Activated CD4-positive, alpha-beta memory T cell treated with anti-CD3 and anti-CD28 coated beads, Interleukin-2, amount 10 ng/mL, durations not matched to agents 7 days and 5 days (primary cell): ENCODE measurements at regions of chr2 and their contacts with region 1.

Region 1: GRCh38 chr2:84781942-84782716 is 98.8 kb downstream of the TRABD2A start:
- DNase-seq: peak; percentile 75
- H3K4me3 Mint-ChIP-seq: no peak overlapping the region
- H3K27ac Mint-ChIP-seq: peak overlapping the region; percentile 97
- H3K4me1 Mint-ChIP-seq: peaks cover 67% of the 10 kb centered on the region
- H3K27me3 Mint-ChIP-seq: no peaks in the 10 kb centered on the region

Region 2: DNA sequence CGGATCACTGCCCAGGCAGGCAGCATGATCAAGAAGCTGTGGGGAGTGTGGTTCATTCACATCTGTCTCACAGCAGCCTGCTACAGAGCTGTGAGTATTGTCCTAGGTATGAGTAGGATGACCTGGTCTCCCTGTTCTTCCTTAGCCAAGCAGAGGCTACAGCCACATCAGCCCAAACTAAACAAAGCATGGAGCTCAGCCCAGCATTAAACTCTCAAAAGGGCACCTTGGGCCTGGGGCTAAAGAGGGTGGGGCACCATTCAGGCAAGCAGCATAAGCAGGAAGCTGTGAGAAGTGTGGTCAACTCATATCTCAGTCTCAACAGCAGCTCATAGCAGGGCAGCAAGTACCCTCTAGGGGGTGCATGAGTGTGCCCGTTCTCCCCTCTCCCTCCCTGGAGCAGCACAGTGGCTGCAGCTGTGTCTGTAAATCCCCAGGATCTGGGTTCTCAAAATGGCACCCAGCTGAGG is 40.8 kb before region 1 on chr2:
- CTCF ChIA-PET with region 1: interaction called, 12 read pairs
- POLR2A ChIA-PET with region 1: interaction called, 11 read pairs
- DNase-seq: peak; percentile 70
- H3K4me3 Mint-ChIP-seq: no peak overlapping the region
- H3K27ac Mint-ChIP-seq: peak overlapping the region; percentile 66
- H3K4me1 Mint-ChIP-seq: peaks cover 12% of the 10 kb centered on the region
- H3K27me3 Mint-ChIP-seq: peaks cover 4% of the 10 kb centered on the region

Region 3: GRCh38 chr2:84832772-84833461 is 50.8 kb after region 1 on chr2:
- CTCF ChIA-PET with region 1: no interaction called
- POLR2A ChIA-PET with region 1: interaction called, 12 read pairs
- DNase-seq: peak; percentile 29
- H3K4me3 Mint-ChIP-seq: peak overlapping the region; percentile 55
- H3K27ac Mint-ChIP-seq: peak overlapping the region; percentile 87
- H3K4me1 Mint-ChIP-seq: peaks cover 43% of the 10 kb centered on the region
- H3K27me3 Mint-ChIP-seq: no peaks in the 10 kb centered on the region

Region 4: DNA sequence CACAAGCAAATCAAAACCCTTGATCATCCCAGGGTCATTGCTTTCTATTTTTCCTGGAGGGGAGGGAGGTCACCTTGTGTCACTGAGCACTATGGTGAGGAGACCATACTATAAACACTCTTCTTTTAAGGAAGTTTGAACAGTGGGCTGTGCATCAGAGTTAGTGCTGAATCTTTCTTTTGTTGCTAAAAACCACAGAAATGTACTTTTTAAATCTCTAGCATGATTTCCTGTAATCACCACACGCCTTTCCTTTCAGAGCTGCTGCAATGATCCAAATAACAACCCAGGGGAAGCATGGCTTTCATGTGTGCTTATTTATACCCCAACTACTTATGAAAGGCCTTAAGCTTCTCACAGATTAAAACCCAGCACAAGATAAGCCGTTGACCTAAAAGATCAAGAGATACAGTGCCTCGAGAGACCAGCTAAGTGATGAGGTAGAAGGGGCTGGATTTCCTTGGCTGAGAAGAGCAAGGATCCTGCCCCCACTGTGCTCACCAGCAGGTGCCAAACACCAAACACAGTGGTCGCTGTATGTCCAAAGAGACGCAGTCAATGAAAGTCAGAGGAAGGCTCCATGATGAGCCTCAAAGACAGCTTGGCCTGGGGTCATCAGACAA is 64.0 kb after region 1 on chr2:
- CTCF ChIA-PET with region 1: interaction called, 3 read pairs
- POLR2A ChIA-PET with region 1: interaction called, 66 read pairs
- DNase-seq: peak; percentile 41
- H3K4me3 Mint-ChIP-seq: peak overlapping the region; percentile 19
- H3K27ac Mint-ChIP-seq: peak overlapping the region; percentile 96
- H3K4me1 Mint-ChIP-seq: peaks cover 91% of the 10 kb centered on the region
- H3K27me3 Mint-ChIP-seq: no peaks in the 10 kb centered on the region

Region 5: GRCh38 chr2:84939426-84940087 is 157.4 kb after region 1 on chr2:
- CTCF ChIA-PET with region 1: no interaction called
- POLR2A ChIA-PET with region 1: interaction called, 22 read pairs
- DNase-seq: peak; percentile 87
- H3K4me3 Mint-ChIP-seq: peak overlapping the region; percentile 72
- H3K27ac Mint-ChIP-seq: peak overlapping the region; percentile 98
- H3K4me1 Mint-ChIP-seq: peaks cover 53% of the 10 kb centered on the region
- H3K27me3 Mint-ChIP-seq: no peaks in the 10 kb centered on the region